Left ventricle myocardium superior (tissue), 1 donor: ENCODE measurements at regions of chr9 and their contacts with region 1.

Region 1: GRCh38 chr9:33081128-33081851 is 4.8 kb upstream of the SMU1 start:
- DNase-seq: no peak
- ATAC-seq: peak; percentile 59

Region 2: DNA sequence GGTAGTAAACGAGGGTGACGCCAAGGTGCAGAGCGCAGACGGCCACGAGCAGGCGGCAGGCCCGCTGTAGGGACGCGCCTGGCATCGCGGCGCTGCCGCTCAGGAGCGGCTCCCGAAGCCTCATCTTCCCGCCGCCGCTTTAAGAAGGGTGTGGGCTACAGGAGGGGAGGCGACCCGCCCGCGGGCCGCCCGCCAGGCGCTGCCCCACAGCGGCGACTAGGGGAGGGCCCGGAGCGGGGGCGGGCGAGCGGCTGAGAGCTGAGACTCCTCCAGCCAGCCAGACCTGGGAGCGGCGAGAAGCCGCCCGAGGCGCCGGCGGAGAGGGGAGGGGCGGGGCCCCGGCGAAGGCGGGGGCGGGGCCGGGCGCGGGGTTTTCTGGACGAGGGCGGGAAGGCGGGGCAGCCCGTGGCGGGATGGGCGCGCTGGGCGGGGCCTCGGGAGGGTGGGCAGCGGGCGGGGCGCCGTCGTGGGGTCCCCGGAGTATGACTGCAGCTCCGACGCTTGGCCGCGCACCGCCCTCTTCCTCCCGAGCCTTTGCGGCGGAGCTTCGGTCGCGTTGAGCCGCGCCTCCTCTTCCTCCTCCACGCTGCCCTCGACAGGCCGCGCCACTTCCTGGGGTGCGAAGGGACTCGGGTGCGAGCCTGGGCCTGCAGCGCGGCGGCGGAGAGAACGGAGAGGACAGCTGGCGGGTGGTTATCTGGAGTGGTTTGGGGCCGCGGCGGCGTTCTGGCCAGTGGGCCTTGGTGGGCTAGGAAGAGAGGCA is 85.9 kb after region 1 on chr9 and contains the start of gene B4GALT1:
- intact Hi-C with region 1: loop called (anchors 10 kb)
- DNase-seq: peak; percentile 98
- ATAC-seq: peak; percentile 77
- total RNA-seq, gene B4GALT1: 42.5 TPM

Region 3: GRCh38 chr9:33272061-33272460 is 190.8 kb after region 1 on chr9:
- intact Hi-C with region 1: no loop called
- DNase-seq: no peak
- ATAC-seq: no peak

Region 4: DNA sequence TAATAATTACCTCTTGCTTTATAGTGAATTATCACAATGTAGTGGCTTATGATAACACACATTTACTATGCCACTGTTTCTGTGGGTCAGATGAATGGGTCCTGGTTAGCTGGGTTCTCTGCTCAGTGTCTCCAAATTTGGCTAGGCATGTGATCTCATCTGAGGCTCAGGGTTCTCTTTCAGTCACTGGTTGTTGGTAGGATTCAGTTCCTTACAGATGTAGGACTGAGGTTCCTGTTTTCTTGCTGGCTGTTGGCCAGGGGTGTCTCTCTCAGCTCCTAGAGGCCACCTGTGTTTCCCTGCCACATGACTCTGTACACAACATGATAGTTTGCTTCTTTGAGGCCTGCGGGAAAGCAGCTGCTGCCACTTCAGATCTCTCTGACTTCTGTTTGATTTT is 216.1 kb after region 1 on chr9:
- intact Hi-C with region 1: no loop called
- DNase-seq: no peak
- ATAC-seq: peak; percentile 56